Dorsolateral prefrontal cortex (tissue), 120 donors: ENCODE measurements at regions of chr13 and their contacts with region 1.

Region 1: DNA sequence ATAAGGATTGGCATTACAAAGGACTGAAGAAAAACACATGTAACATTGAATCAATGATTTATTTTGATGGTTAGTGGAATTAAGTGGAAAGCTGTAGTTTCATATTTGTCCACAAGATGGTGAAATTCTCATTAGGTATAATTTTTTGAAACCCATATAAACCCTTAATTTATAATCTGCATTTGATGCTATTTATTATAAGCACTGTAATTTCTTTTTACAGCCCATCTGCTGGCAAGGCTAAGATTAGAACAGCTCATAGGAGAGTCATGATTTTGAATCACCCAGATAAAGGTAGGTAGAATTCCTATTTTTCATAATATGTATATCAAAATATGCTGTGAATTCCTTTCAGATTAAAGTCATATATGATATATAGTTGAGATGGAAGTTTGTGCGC is 62.2 kb downstream of the DNAJC15 start:
- DNase-seq: no peak
- H3K4me3 ChIP-seq: no peak overlapping the region
- H3K27ac ChIP-seq: peak overlapping the region in 2 of 59 donors; percentile 3 to 12
- H3K27me3 ChIP-seq: no peaks in the 10 kb centered on the region
- CTCF ChIP-seq: peak; percentile 59 to 92 (median 77)

Region 2: GRCh38 chr13:43303033-43303729 is 217.6 kb after region 1 on chr13:
- intact Hi-C with region 1: loop called in 1 of 2 experiments (anchors 10 kb)
- DNase-seq: peak; percentile 20 to 74 (median 70)
- H3K4me3 ChIP-seq: no peak overlapping the region
- H3K27ac ChIP-seq: peak overlapping the region in 52 of 59 donors; percentile 5 to 85 (median 62)
- H3K27me3 ChIP-seq: no peaks in the 10 kb centered on the region
- CTCF ChIP-seq: peak; percentile 13 to 77 (median 58)